Aorta (tissue), 5 donors: ENCODE measurements at regions of chr12 and their contacts with region 1.

Region 1: DNA sequence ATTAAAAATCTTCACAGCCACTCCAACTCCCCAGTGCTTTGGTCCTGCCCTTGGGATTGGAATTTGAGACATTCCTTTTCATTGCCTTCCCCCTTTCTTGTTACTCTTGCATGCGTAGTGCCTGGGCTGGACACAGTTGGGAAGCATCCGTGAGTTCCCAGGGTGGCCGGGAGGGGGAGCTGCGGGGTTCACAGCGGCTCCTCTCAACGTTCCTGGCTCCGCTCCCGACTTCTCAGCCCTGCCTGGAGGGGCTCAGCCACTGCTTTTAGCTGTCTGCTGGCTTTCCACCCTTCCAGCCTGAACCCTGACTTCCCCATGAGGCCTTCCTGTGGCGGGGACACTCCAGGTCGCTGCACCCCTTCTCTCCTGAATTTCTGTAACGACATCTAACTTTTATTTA is 3.2 kb downstream of the TEX52 start:
- DNase-seq: peak; percentile 88 to 95
- ATAC-seq: peak; percentile 90
- H3K4me3 ChIP-seq: no peak overlapping the region
- H3K27ac ChIP-seq: no peak overlapping the region
- H3K4me1 ChIP-seq: no peaks in the 10 kb centered on the region
- H3K27me3 ChIP-seq: no peaks in the 10 kb centered on the region

Region 2: GRCh38 chr12:2890388-2891239 is 37.0 kb after region 1 on chr12 and contains the start of gene TULP3:
- intact Hi-C with region 1: no loop called
- DNase-seq: peak; percentile 99 to 100
- ATAC-seq: peak; percentile 98
- H3K4me3 ChIP-seq: peak within 1 kb of the TSS; percentile 63 to 65
- H3K27ac ChIP-seq: peak within 1 kb of the TSS; percentile 73 to 87
- H3K4me1 ChIP-seq: no peaks in the 10 kb centered on the region
- H3K27me3 ChIP-seq: no peaks in the 10 kb centered on the region
- total RNA-seq, gene TULP3: 22.4 to 35.0 TPM

Region 3: DNA sequence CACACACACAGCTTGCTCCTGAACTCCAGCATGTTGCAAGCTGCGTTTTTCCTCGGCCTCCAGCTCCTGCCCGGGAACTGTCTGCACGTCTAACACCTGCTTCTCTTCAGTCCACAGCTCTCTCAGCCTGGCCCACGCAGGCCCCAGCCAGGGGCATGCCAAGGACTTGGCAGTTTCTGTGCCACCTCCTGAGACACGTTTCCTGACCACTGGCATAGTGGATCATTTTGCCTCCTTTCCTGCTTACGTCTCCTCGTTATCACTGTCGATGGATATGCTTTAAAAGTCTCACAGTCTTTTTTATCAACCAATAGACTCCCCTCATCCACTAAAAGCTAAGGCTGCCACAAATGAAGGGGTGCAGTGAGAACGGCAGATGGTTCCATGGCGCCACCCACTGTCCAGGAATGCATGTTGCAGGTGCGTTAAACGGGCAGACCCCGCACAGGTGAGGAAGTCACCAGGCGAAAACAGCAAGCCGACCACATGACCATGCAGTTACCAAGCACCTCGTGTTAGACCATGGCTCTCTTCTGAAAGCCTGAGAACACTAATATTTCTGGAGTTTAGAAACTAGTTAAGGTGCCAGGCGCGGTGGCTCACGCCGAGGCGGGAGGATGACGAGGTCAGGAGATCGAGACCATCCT is 90.9 kb after region 1 on chr12:
- intact Hi-C with region 1: loop called in 1 of 2 experiments (anchors 5 kb)
- DNase-seq: peak in 1 of 2 donors; percentile 78
- ATAC-seq: peak; percentile 57
- H3K4me3 ChIP-seq: no peak overlapping the region
- H3K27ac ChIP-seq: no peak overlapping the region
- H3K4me1 ChIP-seq: no peaks in the 10 kb centered on the region
- H3K27me3 ChIP-seq: no peaks in the 10 kb centered on the region

Region 4: DNA sequence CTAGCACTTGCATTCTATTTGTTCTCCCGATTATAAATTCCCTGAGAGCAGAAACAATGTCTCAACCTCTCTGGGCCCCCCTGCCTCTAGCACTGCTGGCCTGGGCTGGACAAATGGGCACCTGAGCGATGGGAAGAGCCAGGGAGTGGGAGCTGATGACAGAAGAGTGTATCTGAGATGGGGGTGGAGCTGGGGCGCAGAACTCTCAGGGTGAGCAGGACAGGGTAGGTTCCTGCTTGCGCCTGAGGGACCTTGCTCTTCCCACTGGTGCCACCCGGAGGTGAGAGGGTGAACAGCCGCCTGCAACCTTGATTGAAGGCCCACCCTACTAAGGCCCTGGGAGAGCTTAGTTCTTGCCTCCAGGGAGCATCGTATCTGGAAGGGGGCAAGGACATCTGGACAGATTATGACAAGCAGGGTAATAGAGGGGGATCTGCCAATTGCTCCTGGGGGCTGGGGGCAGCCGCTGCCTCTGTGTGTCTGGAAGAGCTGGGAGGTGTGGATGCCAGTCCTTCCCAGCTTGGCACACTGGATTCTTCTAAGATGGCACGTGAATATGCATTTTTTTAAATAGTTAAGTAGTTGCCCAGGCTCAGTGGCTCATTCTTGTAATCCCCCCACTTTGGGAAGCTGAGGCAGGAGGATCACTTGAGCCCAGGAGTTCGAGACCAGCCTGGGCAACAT is 180.6 kb after region 1 on chr12:
- intact Hi-C with region 1: loop called (anchors 5 kb)
- DNase-seq: peak; percentile 59 to 86
- ATAC-seq: peak; percentile 64
- H3K4me3 ChIP-seq: no peak overlapping the region
- H3K27ac ChIP-seq: no peak overlapping the region
- H3K4me1 ChIP-seq: no peaks in the 10 kb centered on the region
- H3K27me3 ChIP-seq: no peaks in the 10 kb centered on the region